Lower leg skin (tissue), 4 donors: ENCODE measurements at regions of chr16 and their contacts with region 1.

Region 1: DNA sequence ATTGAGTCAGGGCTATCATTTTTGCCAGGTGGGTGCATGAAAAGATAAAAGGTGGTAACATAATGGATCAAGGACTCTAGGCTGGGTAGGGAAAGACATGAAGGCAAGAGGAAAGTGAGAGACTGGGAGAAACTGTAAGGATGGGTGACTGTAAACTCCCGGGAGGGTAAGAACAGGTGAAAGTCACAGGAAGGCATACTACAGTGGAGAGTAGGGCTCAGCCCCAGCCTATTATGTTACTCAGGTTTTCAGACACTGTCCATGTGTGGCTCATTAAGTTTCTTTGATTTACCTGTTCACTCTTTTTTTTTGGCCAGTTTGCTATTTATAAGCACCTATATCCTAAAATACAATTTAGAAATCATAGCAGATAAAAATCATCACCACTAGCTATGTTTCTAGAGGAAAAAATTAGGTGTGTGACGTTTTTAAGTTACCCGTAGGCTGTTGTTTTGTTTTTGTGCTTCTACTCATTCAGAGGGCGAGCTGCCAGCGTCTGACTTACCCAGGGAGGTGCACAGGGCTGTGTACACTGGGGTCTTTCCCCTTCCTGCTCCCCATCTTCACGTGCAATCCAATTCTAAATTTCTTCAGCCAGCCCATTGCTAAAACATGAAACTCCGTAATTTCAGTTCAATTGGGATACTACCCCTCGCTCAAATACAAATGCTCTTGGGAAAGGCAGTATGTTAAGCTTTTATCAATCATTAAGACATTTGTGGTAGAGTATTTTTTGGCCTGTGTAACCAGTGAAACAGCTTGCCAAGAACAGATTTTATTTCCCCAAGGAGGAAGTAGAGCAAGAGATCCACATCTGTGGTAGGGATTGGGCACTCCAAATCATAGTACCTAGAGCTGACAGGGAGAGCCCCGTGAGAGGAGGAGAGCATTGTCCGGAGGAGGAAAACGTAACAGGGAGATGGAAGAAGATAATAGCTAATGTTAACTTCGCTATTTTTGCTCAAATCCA is 21.7 kb upstream of the VWA3A start:
- DNase-seq: no peak
- H3K4me3 ChIP-seq: no peak overlapping the region
- CTCF ChIP-seq: no peak
- POLR2A ChIP-seq: no peak

Region 2: DNA sequence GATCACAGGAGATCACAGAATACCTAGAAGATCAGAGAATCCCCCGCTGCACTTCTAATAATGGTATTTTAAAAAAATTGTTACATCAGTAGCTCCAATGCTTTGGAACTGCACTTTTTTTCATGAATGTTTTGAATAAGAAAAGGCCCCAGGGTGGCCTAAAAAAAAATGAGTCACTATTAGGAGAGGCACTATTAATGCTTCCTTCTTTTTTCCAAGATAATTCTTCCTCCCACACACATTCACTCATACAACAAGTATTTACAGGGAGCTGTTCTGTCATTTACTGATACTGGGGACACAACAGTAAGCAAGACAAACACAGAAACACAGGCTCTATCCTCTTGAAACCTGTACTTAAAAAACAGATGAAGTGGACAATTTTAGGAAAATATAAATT is 69.1 kb before region 1 on chr16:
- intact Hi-C with region 1: loop called (anchors 5 kb)
- DNase-seq: no peak
- H3K4me3 ChIP-seq: no peak overlapping the region
- CTCF ChIP-seq: no peak
- POLR2A ChIP-seq: no peak